GM10248 (cell line): ENCODE measurements at regions of chr2 and their contacts with region 1.

Region 1: DNA sequence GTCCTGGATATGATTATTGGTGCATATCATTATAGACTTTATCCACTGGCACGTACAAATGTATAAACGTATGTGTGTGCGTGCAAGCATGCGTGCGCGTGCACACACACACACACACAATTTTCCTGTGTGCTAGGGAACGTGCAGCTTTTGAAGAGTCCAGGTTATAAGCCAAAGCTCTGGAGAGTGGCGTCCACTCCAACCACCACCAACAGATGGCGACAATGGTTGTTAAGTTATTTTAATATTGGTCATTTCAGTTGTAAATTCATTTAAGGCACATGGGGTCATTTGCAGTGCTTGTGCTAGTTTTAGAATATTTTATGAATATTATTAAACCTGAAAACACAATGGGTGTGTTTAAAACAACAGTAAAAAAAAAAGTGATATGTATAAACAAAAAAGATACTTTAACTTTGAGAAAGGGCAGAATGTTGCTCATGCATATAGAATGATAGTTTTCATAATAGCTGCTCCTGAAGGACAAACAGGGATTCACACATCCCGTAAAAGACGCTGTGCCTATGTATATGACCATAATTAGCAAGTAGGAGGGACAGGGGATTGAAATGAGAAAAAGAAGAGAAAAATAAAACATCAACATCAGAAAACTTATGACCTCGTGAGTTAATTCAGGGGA is 124.2 kb upstream of the ITGB6 start:
- DNase-seq: peak; percentile 29
- CTCF ChIP-seq: peak; percentile 60

Region 2: GRCh38 chr2:160305081-160305760 is 19.1 kb before region 1 on chr2:
- CTCF ChIA-PET with region 1: interaction called, 12 read pairs
- POLR2A ChIA-PET with region 1: no interaction called
- DNase-seq: no peak
- CTCF ChIP-seq: no peak

Region 3: DNA sequence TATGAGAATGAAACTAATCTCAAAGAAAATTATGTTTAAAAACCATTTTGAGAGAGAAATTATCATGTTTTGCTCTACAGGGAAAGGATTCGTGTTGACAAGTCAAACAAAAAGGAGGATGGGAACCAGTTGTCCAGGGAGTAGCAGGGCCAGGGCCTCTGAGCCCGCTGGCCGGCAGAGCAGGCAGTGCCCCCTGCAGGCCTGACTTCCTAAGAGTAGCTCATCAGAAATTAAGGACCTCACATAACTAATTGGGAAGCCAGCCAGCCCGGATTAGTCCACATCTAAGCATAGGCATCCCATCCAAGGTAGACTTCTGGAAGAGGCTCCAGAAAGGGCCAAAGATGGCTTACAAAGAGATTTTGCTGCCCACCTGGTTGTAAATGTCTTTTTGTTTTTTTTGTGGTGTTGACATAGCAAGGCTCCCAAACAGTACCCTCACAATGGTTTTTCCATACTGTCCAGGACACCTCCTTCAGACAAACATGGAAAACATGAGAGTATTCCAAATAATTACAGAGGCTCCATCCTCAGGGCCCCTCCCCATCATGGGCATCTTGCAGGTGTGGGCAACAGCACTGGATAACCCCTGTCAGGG is 594.7 kb after region 1 on chr2:
- CTCF ChIA-PET with region 1: interaction called, 17 read pairs
- POLR2A ChIA-PET with region 1: no interaction called
- DNase-seq: peak; percentile 33
- CTCF ChIP-seq: peak; percentile 57